ENCODE measurements at regions of chr10 and their contacts with region 1.

Region 1: GRCh38 chr10:125102231-125102630 is 58.1 kb downstream of the CTBP2 start:
- DNase-seq: peak; percentile 59
- H3K4me3 ChIP-seq: no peak overlapping the region
- H3K27ac ChIP-seq: peak overlapping the region; percentile 29
- H3K4me1 ChIP-seq: peaks cover 6% of the 10 kb centered on the region
- H3K27me3 ChIP-seq: no peaks in the 10 kb centered on the region
- CTCF ChIP-seq: no peak

Region 2: DNA sequence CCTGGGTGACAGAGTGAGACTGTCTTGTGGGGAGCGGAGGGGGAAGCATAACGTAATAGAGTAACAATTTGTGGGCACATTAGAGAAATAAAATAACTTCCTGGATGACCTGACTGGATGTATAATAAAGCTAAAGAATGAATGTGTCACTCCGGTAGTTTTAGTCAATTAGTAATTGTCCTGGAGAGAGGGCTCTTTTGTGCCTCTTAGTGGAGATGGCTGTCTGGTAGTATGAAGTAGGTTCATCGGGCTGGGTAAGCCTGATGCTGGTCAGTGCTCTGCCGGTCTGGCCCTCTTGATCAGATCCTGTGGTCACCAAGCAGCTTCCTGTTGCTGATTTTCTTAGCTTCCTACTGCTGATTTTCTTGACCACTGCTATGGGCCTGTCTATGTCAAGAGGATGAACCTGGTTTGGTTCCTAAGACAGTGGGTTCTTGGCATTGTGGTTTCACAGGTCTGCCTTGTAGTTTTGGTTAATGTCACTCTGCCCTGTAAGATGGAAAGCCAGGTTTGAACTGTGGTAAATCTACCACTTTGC is 126.2 kb before region 1 on chr10:
- intact Hi-C with region 1: no loop called
- DNase-seq: no peak
- H3K4me3 ChIP-seq: no peak overlapping the region
- H3K27ac ChIP-seq: no peak overlapping the region
- H3K4me1 ChIP-seq: no peaks in the 10 kb centered on the region
- H3K27me3 ChIP-seq: no peaks in the 10 kb centered on the region
- CTCF ChIP-seq: no peak

Region 3: DNA sequence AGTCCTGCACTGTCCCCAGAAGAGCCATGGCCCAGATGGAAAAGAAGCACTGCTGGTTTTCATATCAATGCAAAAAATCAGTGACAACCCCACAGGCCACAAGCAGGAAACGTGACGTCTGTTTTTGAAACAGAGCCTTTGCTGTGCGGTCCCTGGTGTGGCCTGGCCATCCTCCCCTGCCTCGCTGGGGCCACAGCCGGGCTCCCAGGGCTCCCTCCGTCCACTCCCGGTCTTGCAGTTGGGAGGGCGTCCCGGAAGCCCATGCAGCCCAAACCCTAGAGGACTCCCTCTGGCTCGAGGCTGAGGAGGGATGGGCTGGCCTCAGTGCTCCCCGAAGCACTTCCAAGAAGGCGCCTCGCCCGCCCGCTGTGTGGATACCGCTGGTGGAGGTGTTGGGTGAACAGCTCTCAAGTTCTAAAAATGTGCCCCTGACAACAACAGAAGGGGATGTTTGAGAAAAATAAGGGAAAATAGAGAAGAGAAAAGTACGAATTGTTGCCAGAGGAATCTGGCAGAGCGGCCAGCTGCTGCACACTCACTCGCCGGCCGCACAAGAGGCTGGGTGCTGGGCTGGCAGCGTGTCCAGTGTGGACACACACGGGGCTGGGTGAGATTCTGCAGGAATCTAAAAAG is 86.8 kb before region 1 on chr10:
- intact Hi-C with region 1: no loop called
- DNase-seq: no peak
- H3K4me3 ChIP-seq: no peak overlapping the region
- H3K27ac ChIP-seq: peak overlapping the region; percentile 27
- H3K4me1 ChIP-seq: peaks cover 5% of the 10 kb centered on the region
- H3K27me3 ChIP-seq: no peaks in the 10 kb centered on the region
- CTCF ChIP-seq: no peak

Region 4: GRCh38 chr10:125152450-125153368 is 50.5 kb after region 1 on chr10:
- intact Hi-C with region 1: loop called (anchors 5 kb)
- DNase-seq: peak; percentile 71
- H3K4me3 ChIP-seq: peak overlapping the region; percentile 26
- H3K27ac ChIP-seq: peak overlapping the region; percentile 97
- H3K4me1 ChIP-seq: peaks cover 46% of the 10 kb centered on the region
- H3K27me3 ChIP-seq: no peaks in the 10 kb centered on the region
- CTCF ChIP-seq: no peak

Region 5: GRCh38 chr10:125316449-125316848 is 214.2 kb after region 1 on chr10:
- intact Hi-C with region 1: no loop called
- DNase-seq: no peak
- H3K4me3 ChIP-seq: no peak overlapping the region
- H3K27ac ChIP-seq: no peak overlapping the region
- H3K4me1 ChIP-seq: no peaks in the 10 kb centered on the region
- H3K27me3 ChIP-seq: no peaks in the 10 kb centered on the region
- CTCF ChIP-seq: no peak

Measured in colonic mucosa (tissue), 4 donors.